K562 (cell line): ENCODE measurements at regions of chr2 and their contacts with region 1.

Region 1: GRCh38 chr2:182866461-182867406 is at the start of gene FRZB:
- DNase-seq: peak in 2 of 4 experiments; percentile 14 to 18
- ATAC-seq: peak; percentile 55
- H3K4me3 ChIP-seq: no peak within 1 kb of the TSS
- H3K27ac ChIP-seq: no peak within 1 kb of the TSS
- H3K4me1 ChIP-seq: peaks cover 0 to 15% of the 10 kb centered on the region in 2 experiments; a peak in 1 of 5 replicates
- H3K27me3 ChIP-seq: peaks cover 40 to 41% of the 10 kb centered on the region in 2 experiments
- CTCF ChIP-seq: no peak
- EP300 ChIP-seq: no peak
- POLR2A ChIP-seq: no peak
- RAD21 ChIP-seq: no peak
- polyA plus RNA-seq, gene FRZB: not detected

Region 2: GRCh38 chr2:182049372-182050148 is 817.2 kb before region 1 on chr2:
- CTCF ChIA-PET with region 1: no interaction called
- POLR2A ChIA-PET with region 1: no interaction called
- in situ Hi-C with region 1: no loop called
- intact Hi-C with region 1: no loop called
- DNase-seq: no peak
- ATAC-seq: no peak
- H3K4me3 ChIP-seq: no peak overlapping the region
- H3K27ac ChIP-seq: no peak overlapping the region
- H3K4me1 ChIP-seq: no peaks in the 10 kb centered on the region
- H3K27me3 ChIP-seq: no peaks in the 10 kb centered on the region
- CTCF ChIP-seq: no peak
- EP300 ChIP-seq: no peak
- POLR2A ChIP-seq: no peak
- RAD21 ChIP-seq: no peak

Region 3: GRCh38 chr2:182186132-182186735 is 680.5 kb before region 1 on chr2:
- CTCF ChIA-PET with region 1: no interaction called
- POLR2A ChIA-PET with region 1: no interaction called
- in situ Hi-C with region 1: no loop called
- intact Hi-C with region 1: loop called (anchors 10 kb)
- DNase-seq: peak; percentile 13 to 51 (median 16)
- ATAC-seq: peak; percentile 83
- H3K4me3 ChIP-seq: no peak overlapping the region
- H3K27ac ChIP-seq: no peak overlapping the region
- H3K4me1 ChIP-seq: no peaks in the 10 kb centered on the region
- H3K27me3 ChIP-seq: no peaks in the 10 kb centered on the region
- CTCF ChIP-seq: peak; percentile 57 to 88 (median 63); a peak in 5 of 6 replicates
- EP300 ChIP-seq: no peak
- POLR2A ChIP-seq: no peak
- RAD21 ChIP-seq: peak; percentile 89 to 90

Region 4: GRCh38 chr2:182666674-182667314 is 199.9 kb before region 1 on chr2:
- CTCF ChIA-PET with region 1: no interaction called
- POLR2A ChIA-PET with region 1: no interaction called
- in situ Hi-C with region 1: no loop called
- intact Hi-C with region 1: loop called (anchors 5 kb)
- DNase-seq: peak; percentile 27 to 49 (median 36)
- ATAC-seq: peak; percentile 83
- H3K4me3 ChIP-seq: no peak overlapping the region
- H3K27ac ChIP-seq: no peak overlapping the region
- H3K4me1 ChIP-seq: no peaks in the 10 kb centered on the region
- H3K27me3 ChIP-seq: peaks cover 2 to 13% of the 10 kb centered on the region in 2 experiments; a peak in 3 of 5 replicates
- CTCF ChIP-seq: peak; percentile 37 to 59 (median 57); a peak in 5 of 6 replicates
- EP300 ChIP-seq: no peak
- POLR2A ChIP-seq: no peak
- RAD21 ChIP-seq: peak in 1 of 2 experiments; percentile 65; a peak in 3 of 4 replicates

Region 5: GRCh38 chr2:182763311-182763912 is 103.3 kb before region 1 on chr2:
- CTCF ChIA-PET with region 1: no interaction called
- POLR2A ChIA-PET with region 1: no interaction called
- in situ Hi-C with region 1: no loop called
- intact Hi-C with region 1: loop called (anchors 1 kb)
- DNase-seq: peak; percentile 23 to 68 (median 30)
- ATAC-seq: peak; percentile 87
- H3K4me3 ChIP-seq: no peak overlapping the region
- H3K27ac ChIP-seq: no peak overlapping the region
- H3K4me1 ChIP-seq: no peaks in the 10 kb centered on the region
- H3K27me3 ChIP-seq: no peaks in the 10 kb centered on the region
- CTCF ChIP-seq: peak; percentile 64 to 72 (median 70)
- EP300 ChIP-seq: no peak
- POLR2A ChIP-seq: no peak
- RAD21 ChIP-seq: peak; percentile 42 to 67

Region 6: GRCh38 chr2:182784777-182785176 is 82.0 kb before region 1 on chr2:
- CTCF ChIA-PET with region 1: no interaction called
- POLR2A ChIA-PET with region 1: no interaction called
- in situ Hi-C with region 1: no loop called
- intact Hi-C with region 1: loop called (anchors 5 kb)
- DNase-seq: peak; percentile 18 to 34 (median 20)
- ATAC-seq: peak; percentile 79
- H3K4me3 ChIP-seq: no peak overlapping the region
- H3K27ac ChIP-seq: no peak overlapping the region
- H3K4me1 ChIP-seq: no peaks in the 10 kb centered on the region; a peak in 2 of 5 replicates
- H3K27me3 ChIP-seq: no peaks in the 10 kb centered on the region
- CTCF ChIP-seq: peak; percentile 36 to 72 (median 47); a peak in 4 of 6 replicates
- EP300 ChIP-seq: no peak
- POLR2A ChIP-seq: no peak
- RAD21 ChIP-seq: peak; percentile 52 to 78

Region 7: GRCh38 chr2:182917924-182918323 is 51.2 kb after region 1 on chr2:
- CTCF ChIA-PET with region 1: no interaction called
- POLR2A ChIA-PET with region 1: no interaction called
- in situ Hi-C with region 1: no loop called
- intact Hi-C with region 1: no loop called
- DNase-seq: no peak
- ATAC-seq: no peak
- H3K4me3 ChIP-seq: no peak overlapping the region
- H3K27ac ChIP-seq: no peak overlapping the region
- H3K4me1 ChIP-seq: no peaks in the 10 kb centered on the region
- H3K27me3 ChIP-seq: no peaks in the 10 kb centered on the region
- CTCF ChIP-seq: no peak
- EP300 ChIP-seq: no peak
- POLR2A ChIP-seq: no peak
- RAD21 ChIP-seq: no peak